ENCODE measurements at regions of chr11 and their contacts with region 1.

Region 1: GRCh38 chr11:72040726-72041441 is 39.5 kb downstream of the NUMA1 start:
- DNase-seq: peak; percentile 60 to 91 (median 82)
- ATAC-seq: peak; percentile 78
- H3K4me3 ChIP-seq: peak overlapping the region; percentile 75
- H3K4me3 Mint-ChIP-seq: no peak overlapping the region
- H3K27ac ChIP-seq: peak overlapping the region; percentile 91 to 95
- H3K27ac Mint-ChIP-seq: no peak overlapping the region
- H3K4me1 ChIP-seq: peaks cover 64% of the 10 kb centered on the region
- H3K4me1 Mint-ChIP-seq: peaks cover 46% of the 10 kb centered on the region
- H3K27me3 ChIP-seq: no peaks in the 10 kb centered on the region
- H3K27me3 Mint-ChIP-seq: no peaks in the 10 kb centered on the region
- CTCF ChIP-seq: no peak

Region 2: DNA sequence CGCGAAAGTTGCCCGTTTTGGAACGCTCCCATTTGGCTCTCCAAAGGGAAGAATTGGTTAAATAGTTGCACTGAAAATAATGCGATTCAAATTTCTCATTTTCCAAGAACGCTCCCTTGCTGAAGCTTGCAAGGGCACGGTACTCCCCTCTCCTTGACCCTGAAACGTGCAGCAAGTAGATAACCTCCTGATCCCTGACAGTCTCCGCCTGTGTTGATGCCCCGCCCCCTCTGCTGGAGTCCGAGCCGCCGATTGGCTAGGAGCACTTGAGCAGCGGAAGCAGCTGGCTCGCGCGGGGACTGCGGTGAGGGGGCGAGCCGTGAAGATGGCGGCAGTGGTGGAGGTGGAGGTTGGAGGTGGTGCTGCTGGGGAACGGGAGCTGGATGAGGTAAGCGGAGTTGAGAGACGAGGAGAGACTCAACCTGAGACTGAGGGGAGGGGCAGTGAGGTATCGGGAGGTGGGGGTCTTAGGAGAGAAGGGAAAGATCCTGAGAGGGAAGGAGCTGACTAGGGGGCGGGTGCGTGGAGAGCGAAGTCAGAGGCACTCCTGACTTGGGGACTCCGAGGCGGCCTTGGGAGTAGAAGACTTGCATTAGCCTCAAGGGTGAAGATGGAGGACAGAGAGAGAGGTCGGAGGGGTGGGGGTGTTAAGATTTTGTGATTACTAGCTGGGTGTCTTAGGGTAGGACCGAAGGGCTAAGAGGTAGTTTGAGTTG is 112.0 kb before region 1 on chr11 and contains the start of gene RNF121:
- CTCF ChIA-PET with region 1: no interaction called
- POLR2A ChIA-PET with region 1: interaction called, 19 read pairs
- intact Hi-C with region 1: no loop called
- DNase-seq: peak; percentile 93 to 98 (median 97)
- ATAC-seq: peak; percentile 86
- H3K4me3 ChIP-seq: peak within 1 kb of the TSS; percentile 79
- H3K4me3 Mint-ChIP-seq: peak within 1 kb of the TSS; percentile 96
- H3K27ac ChIP-seq: peak within 1 kb of the TSS; percentile 92 to 95
- H3K27ac Mint-ChIP-seq: peak within 1 kb of the TSS; percentile 93
- H3K4me1 ChIP-seq: peaks cover 32% of the 10 kb centered on the region
- H3K4me1 Mint-ChIP-seq: peaks cover 57% of the 10 kb centered on the region
- H3K27me3 ChIP-seq: no peaks in the 10 kb centered on the region
- H3K27me3 Mint-ChIP-seq: no peaks in the 10 kb centered on the region
- CTCF ChIP-seq: no peak
- total RNA-seq, gene RNF121: 10.1 to 10.4 TPM

Region 3: GRCh38 chr11:72030472-72031045 is 10.3 kb before region 1 on chr11:
- CTCF ChIA-PET with region 1: interaction called, 56 read pairs
- POLR2A ChIA-PET with region 1: interaction called, 32 read pairs
- intact Hi-C with region 1: no loop called
- DNase-seq: no peak
- ATAC-seq: no peak
- H3K4me3 ChIP-seq: no peak overlapping the region
- H3K4me3 Mint-ChIP-seq: no peak overlapping the region
- H3K27ac ChIP-seq: peak overlapping the region in 1 of 2 donors; percentile 17
- H3K27ac Mint-ChIP-seq: peak overlapping the region; percentile 66
- H3K4me1 ChIP-seq: peaks cover 54% of the 10 kb centered on the region
- H3K4me1 Mint-ChIP-seq: peaks cover 68% of the 10 kb centered on the region
- H3K27me3 ChIP-seq: no peaks in the 10 kb centered on the region
- H3K27me3 Mint-ChIP-seq: no peaks in the 10 kb centered on the region
- CTCF ChIP-seq: no peak

Region 4: GRCh38 chr11:72085621-72086351 is 44.9 kb after region 1 on chr11:
- CTCF ChIA-PET with region 1: interaction called, 24 read pairs
- POLR2A ChIA-PET with region 1: interaction called, 44 read pairs
- intact Hi-C with region 1: loop called in 1 of 2 experiments (anchors 1 kb)
- DNase-seq: no peak
- ATAC-seq: no peak
- H3K4me3 ChIP-seq: no peak overlapping the region
- H3K4me3 Mint-ChIP-seq: no peak overlapping the region
- H3K27ac ChIP-seq: no peak overlapping the region
- H3K27ac Mint-ChIP-seq: peak overlapping the region; percentile 50
- H3K4me1 ChIP-seq: peaks cover 15% of the 10 kb centered on the region
- H3K4me1 Mint-ChIP-seq: peaks cover 17% of the 10 kb centered on the region
- H3K27me3 ChIP-seq: no peaks in the 10 kb centered on the region
- H3K27me3 Mint-ChIP-seq: no peaks in the 10 kb centered on the region
- CTCF ChIP-seq: no peak

Region 5: GRCh38 chr11:72112321-72113219 is 71.7 kb after region 1 on chr11 and contains the start of gene ANAPC15:
- CTCF ChIA-PET with region 1: interaction called, 3 read pairs
- POLR2A ChIA-PET with region 1: interaction called, 52 read pairs
- intact Hi-C with region 1: loop called in 1 of 2 experiments (anchors 2 kb)
- DNase-seq: peak; percentile 93 to 99 (median 97)
- ATAC-seq: peak; percentile 84
- H3K4me3 ChIP-seq: peak within 1 kb of the TSS; percentile 68
- H3K4me3 Mint-ChIP-seq: peak within 1 kb of the TSS; percentile 93
- H3K27ac ChIP-seq: peak within 1 kb of the TSS; percentile 97 to 98
- H3K27ac Mint-ChIP-seq: peak within 1 kb of the TSS; percentile 98
- H3K4me1 ChIP-seq: peaks cover 17% of the 10 kb centered on the region
- H3K4me1 Mint-ChIP-seq: peaks cover 19% of the 10 kb centered on the region
- H3K27me3 ChIP-seq: no peaks in the 10 kb centered on the region
- H3K27me3 Mint-ChIP-seq: no peaks in the 10 kb centered on the region
- CTCF ChIP-seq: no peak
- total RNA-seq, gene ANAPC15: 48.8 to 52.5 TPM

Region 6: GRCh38 chr11:72814286-72815109 is 773.6 kb after region 1 on chr11 and contains the start of gene ATG16L2:
- CTCF ChIA-PET with region 1: no interaction called
- POLR2A ChIA-PET with region 1: no interaction called
- intact Hi-C with region 1: loop called in 1 of 2 experiments (anchors 5 kb)
- DNase-seq: peak in 13 of 14 experiments; percentile 78 to 95 (median 87)
- ATAC-seq: peak; percentile 81
- H3K4me3 ChIP-seq: peak within 1 kb of the TSS; percentile 96
- H3K4me3 Mint-ChIP-seq: peak within 1 kb of the TSS; percentile 99
- H3K27ac ChIP-seq: peak within 1 kb of the TSS; percentile 97 to 100
- H3K27ac Mint-ChIP-seq: peak within 1 kb of the TSS; percentile 97
- H3K4me1 ChIP-seq: peaks cover 38% of the 10 kb centered on the region
- H3K4me1 Mint-ChIP-seq: peaks cover 57% of the 10 kb centered on the region
- H3K27me3 ChIP-seq: no peaks in the 10 kb centered on the region
- H3K27me3 Mint-ChIP-seq: no peaks in the 10 kb centered on the region
- CTCF ChIP-seq: peak; percentile 29
- total RNA-seq, gene ATG16L2: 58.3 to 61.6 TPM

Measured in CD4-positive, alpha-beta T cell (primary cell).